ENCODE measurements at regions of chr16 and their contacts with region 1.

Region 1: GRCh38 chr16:85569615-85570212 is 43.4 kb upstream of the GSE1 start:
- DNase-seq: no peak
- ATAC-seq: peak; percentile 2 to 20 (median 10)
- H3K4me3 ChIP-seq: no peak overlapping the region
- H3K27ac ChIP-seq: peak overlapping the region; percentile 64
- H3K4me1 ChIP-seq: peaks cover 57% of the 10 kb centered on the region
- H3K27me3 ChIP-seq: no peaks in the 10 kb centered on the region
- CTCF ChIP-seq: no peak

Region 2: GRCh38 chr16:85583491-85584181 is 13.9 kb after region 1 on chr16:
- intact Hi-C with region 1: no loop called
- DNase-seq: no peak
- ATAC-seq: no peak
- H3K4me3 ChIP-seq: no peak overlapping the region
- H3K27ac ChIP-seq: no peak overlapping the region
- H3K4me1 ChIP-seq: peaks cover 15% of the 10 kb centered on the region
- H3K27me3 ChIP-seq: no peaks in the 10 kb centered on the region
- CTCF ChIP-seq: no peak

Region 3: DNA sequence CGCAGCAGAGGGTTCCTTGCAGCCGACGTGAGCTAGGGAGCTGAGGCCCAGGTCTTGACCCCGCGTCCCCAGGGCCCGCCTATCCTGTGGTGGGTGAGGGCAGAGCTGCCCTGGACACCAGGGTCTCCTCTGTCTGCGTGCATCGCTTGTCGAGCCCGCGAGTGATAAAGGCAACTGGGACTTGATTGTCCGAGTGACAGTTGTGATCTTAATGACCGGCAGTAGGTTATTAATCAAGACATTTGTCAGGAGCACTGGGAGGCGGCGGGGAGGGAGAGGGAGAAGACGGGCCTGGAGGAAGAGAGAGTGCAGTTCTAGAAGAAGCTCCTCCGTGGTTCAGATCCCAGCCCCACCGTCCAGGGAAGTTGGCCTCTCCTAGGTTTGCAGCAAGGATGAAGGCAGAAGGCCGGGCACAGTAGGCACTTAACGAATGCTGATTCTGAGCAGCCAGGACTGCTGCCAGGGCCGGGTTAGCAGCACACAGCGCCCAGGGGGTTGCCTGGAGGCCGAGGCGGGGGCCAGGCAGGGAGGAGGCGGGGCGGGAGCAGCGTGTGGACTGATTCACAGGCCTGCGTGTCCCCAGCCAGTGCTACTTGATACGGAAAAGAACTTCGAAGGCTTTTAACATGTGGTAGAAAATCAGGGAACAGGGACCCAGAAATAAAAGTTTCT is 32.2 kb after region 1 on chr16:
- intact Hi-C with region 1: loop called in 1 of 2 experiments (anchors 5 kb)
- DNase-seq: peak in 1 of 2 donors; percentile 75
- ATAC-seq: peak; percentile 56 to 81 (median 62)
- H3K4me3 ChIP-seq: no peak overlapping the region
- H3K27ac ChIP-seq: peak overlapping the region; percentile 58
- H3K4me1 ChIP-seq: peaks cover 43% of the 10 kb centered on the region
- H3K27me3 ChIP-seq: no peaks in the 10 kb centered on the region
- CTCF ChIP-seq: no peak

Region 4: DNA sequence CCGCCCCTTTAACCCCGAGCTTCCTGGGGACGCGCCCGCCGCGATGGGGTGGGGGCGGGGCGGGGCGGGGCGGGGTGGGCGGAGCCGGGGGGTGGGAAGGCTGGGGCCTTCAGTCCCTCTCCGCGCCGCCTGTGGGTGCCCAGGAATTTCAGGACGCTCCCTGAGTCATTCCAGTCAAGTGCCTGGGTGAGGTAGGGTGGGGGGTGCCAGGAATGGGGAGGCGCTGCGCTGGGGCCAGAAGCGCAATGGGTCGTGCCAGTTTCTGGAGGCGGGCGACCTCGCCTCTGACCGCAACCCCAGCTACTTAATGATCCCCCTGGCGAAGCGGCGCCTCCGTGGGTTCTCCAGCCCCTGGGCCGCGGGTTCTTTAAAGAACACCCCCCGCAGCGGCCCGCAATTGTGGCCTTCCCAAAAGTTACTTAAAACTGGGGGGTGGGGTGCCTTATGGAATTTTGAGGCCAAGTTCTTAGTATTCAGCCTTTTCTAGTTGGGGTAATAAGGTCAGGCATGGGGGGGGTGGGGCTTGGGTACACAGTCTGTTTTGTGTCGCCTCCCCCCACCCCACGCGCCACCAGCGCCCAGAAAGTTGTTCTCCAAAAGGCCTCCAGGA is 42.6 kb after region 1 on chr16:
- intact Hi-C with region 1: no loop called
- DNase-seq: peak; percentile 88 to 91
- ATAC-seq: peak; percentile 54 to 70 (median 66)
- H3K4me3 ChIP-seq: peak overlapping the region; percentile 79
- H3K27ac ChIP-seq: peak overlapping the region; percentile 99
- H3K4me1 ChIP-seq: peaks cover 57% of the 10 kb centered on the region
- H3K27me3 ChIP-seq: no peaks in the 10 kb centered on the region
- CTCF ChIP-seq: no peak